Naive thymus-derived CD4-positive, alpha-beta T cell (primary cell): ENCODE measurements at regions of chr3 and their contacts with region 1.

Region 1: DNA sequence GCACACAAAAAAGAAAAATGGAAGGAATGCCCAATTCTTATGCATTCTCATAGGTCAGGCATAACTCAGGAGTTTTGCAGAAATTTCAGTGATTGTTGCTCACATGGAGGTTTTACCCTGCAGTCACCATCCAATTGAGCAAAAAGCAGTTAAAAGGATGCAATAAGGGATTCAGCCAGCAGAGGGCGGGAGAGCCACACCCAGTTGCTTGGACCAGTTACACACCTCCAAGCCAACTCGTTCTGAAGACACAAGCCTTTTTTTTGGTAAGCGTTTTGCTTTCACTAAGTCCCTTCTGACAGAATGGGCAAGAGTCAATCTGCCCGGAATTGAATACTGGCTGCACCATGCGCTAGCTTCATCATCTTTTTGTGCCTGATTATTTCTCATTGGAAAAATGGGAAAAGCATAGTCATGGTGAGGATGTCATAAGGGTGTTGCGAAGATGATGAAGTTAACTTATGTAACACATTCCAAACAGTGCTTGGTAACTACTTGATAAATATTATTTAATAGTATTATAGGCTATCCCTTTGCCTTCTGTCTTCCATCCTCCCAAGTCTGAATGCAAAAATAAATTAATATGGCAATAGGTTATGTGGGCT is 154.4 kb upstream of the SGO1 start:
- DNase-seq: peak; percentile 12 to 56 (median 44)
- ATAC-seq: peak; percentile 81
- H3K4me3 ChIP-seq: no peak overlapping the region
- H3K4me3 Mint-ChIP-seq: no peak overlapping the region
- H3K27ac ChIP-seq: no peak overlapping the region
- H3K27ac Mint-ChIP-seq: no peak overlapping the region
- H3K4me1 ChIP-seq: no peaks in the 10 kb centered on the region
- H3K4me1 Mint-ChIP-seq: no peaks in the 10 kb centered on the region
- H3K27me3 ChIP-seq: no peaks in the 10 kb centered on the region
- H3K27me3 Mint-ChIP-seq: peaks cover 0 to 4% (median 0%) of the 10 kb centered on the region in 5 donors

Region 2: GRCh38 chr3:20396335-20396734 is 55.9 kb after region 1 on chr3:
- CTCF ChIA-PET with region 1: no interaction called
- POLR2A ChIA-PET with region 1: no interaction called
- intact Hi-C with region 1: no loop called
- DNase-seq: no peak
- ATAC-seq: no peak
- H3K4me3 ChIP-seq: no peak overlapping the region
- H3K4me3 Mint-ChIP-seq: no peak overlapping the region
- H3K27ac ChIP-seq: no peak overlapping the region
- H3K27ac Mint-ChIP-seq: no peak overlapping the region
- H3K4me1 ChIP-seq: no peaks in the 10 kb centered on the region
- H3K4me1 Mint-ChIP-seq: no peaks in the 10 kb centered on the region
- H3K27me3 ChIP-seq: no peaks in the 10 kb centered on the region
- H3K27me3 Mint-ChIP-seq: no peaks in the 10 kb centered on the region

Region 3: DNA sequence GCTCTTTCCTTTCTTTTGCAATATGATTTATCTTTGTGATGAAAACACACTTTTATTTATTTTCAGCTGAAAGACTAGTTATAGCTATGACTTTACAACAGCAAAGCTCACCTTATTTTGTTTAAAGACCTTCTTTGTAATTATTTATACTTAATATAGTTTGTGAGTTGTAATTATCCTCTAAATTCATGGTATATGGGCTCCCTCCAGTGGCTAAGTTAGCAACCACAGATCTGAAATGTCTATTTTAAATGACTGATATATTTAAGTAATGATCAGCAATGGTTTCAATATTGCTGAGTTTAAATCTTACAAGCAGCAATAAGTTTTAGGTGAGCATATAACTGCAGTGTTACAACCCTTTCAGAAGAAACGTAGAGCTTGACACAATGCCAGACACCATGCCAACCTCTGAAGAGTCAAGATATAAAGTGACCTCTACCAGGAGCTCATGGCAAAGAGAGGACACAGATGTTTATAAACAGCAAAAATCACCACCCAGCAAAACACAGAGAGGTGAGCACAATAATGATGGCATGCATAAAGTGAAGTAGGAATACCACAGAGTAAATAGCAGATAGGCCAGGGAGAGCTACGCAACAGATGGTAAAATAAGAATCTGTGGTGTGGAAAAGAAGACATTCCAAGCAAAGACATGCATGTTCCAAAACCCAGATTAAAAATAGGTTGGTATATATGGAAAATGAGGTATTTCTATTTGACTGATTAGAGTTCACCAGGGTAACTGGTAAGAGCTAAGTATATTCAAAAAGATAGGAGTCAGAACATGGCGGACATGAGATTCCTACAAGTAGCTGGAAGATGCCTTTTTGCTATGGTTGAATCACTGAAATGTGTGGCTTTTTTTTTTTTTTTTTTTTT is 1554.3 kb after region 1 on chr3:
- CTCF ChIA-PET with region 1: no interaction called
- POLR2A ChIA-PET with region 1: no interaction called
- intact Hi-C with region 1: loop called in 1 of 2 experiments (anchors 5 kb)
- DNase-seq: no peak
- ATAC-seq: no peak
- H3K4me3 ChIP-seq: no peak overlapping the region
- H3K4me3 Mint-ChIP-seq: no peak overlapping the region
- H3K27ac ChIP-seq: no peak overlapping the region
- H3K27ac Mint-ChIP-seq: no peak overlapping the region
- H3K4me1 ChIP-seq: no peaks in the 10 kb centered on the region
- H3K4me1 Mint-ChIP-seq: no peaks in the 10 kb centered on the region
- H3K27me3 ChIP-seq: no peaks in the 10 kb centered on the region
- H3K27me3 Mint-ChIP-seq: no peaks in the 10 kb centered on the region

Region 4: DNA sequence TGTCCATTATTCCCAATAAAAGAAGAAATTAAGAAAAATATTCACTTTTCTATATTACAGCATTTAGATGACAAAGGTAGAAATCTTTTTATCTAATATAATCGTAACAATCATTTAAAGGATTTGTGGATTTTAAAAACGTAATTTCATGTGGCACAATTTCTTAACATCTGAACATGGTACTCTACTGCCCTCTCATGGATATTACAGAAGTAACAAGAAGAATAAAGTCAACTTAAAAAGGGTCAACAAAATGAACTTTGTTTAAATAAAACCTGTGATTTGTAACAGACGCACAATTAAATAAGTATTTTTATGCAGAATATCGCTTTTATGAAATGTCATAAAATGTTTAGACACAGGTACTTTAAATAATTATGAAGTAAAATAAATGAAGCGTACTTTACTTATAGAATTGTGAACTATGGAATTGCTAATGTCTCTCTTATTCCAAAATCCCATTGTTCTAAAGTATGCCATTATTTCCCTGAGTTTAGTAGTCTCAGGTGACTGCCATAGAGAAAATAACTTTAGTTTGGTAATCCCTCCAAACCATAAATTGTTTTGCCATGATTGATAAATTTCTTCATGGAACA is 1777.4 kb after region 1 on chr3:
- CTCF ChIA-PET with region 1: no interaction called
- POLR2A ChIA-PET with region 1: no interaction called
- intact Hi-C with region 1: loop called in 1 of 2 experiments (anchors 2 kb)
- DNase-seq: no peak
- ATAC-seq: no peak
- H3K4me3 ChIP-seq: no peak overlapping the region
- H3K4me3 Mint-ChIP-seq: no peak overlapping the region
- H3K27ac ChIP-seq: no peak overlapping the region
- H3K27ac Mint-ChIP-seq: no peak overlapping the region
- H3K4me1 ChIP-seq: no peaks in the 10 kb centered on the region
- H3K4me1 Mint-ChIP-seq: no peaks in the 10 kb centered on the region
- H3K27me3 ChIP-seq: no peaks in the 10 kb centered on the region
- H3K27me3 Mint-ChIP-seq: no peaks in the 10 kb centered on the region